ENCODE measurements at regions of chr2 and their contacts with region 1.

Region 1: GRCh38 chr2:38740851-38741731 is 10.1 kb downstream of the SRSF7 start:
- DNase-seq: peak in 2 of 3 donors; percentile 42 to 62
- ATAC-seq: peak; percentile 9 to 18
- H3K4me3 ChIP-seq: no peak overlapping the region
- H3K27ac ChIP-seq: no peak overlapping the region
- H3K4me1 ChIP-seq: peaks cover 3% of the 10 kb centered on the region
- H3K27me3 ChIP-seq: no peaks in the 10 kb centered on the region

Region 2: GRCh38 chr2:38535744-38536506 is 205.2 kb before region 1 on chr2:
- intact Hi-C with region 1: loop called in 2 of 4 experiments (anchors 10 kb)
- DNase-seq: peak; percentile 88 to 96 (median 93)
- ATAC-seq: peak; percentile 94 to 95
- H3K4me3 ChIP-seq: peak overlapping the region; percentile 56
- H3K27ac ChIP-seq: no peak overlapping the region
- H3K4me1 ChIP-seq: no peaks in the 10 kb centered on the region
- H3K27me3 ChIP-seq: no peaks in the 10 kb centered on the region

Region 3: GRCh38 chr2:38581193-38582147 is 159.6 kb before region 1 on chr2:
- intact Hi-C with region 1: loop called in 1 of 4 experiments (anchors 5 kb)
- DNase-seq: peak in 1 of 3 donors; percentile 53
- ATAC-seq: peak; percentile 79 to 80
- H3K4me3 ChIP-seq: no peak overlapping the region
- H3K27ac ChIP-seq: no peak overlapping the region
- H3K4me1 ChIP-seq: peaks cover 1% of the 10 kb centered on the region
- H3K27me3 ChIP-seq: no peaks in the 10 kb centered on the region

Region 4: DNA sequence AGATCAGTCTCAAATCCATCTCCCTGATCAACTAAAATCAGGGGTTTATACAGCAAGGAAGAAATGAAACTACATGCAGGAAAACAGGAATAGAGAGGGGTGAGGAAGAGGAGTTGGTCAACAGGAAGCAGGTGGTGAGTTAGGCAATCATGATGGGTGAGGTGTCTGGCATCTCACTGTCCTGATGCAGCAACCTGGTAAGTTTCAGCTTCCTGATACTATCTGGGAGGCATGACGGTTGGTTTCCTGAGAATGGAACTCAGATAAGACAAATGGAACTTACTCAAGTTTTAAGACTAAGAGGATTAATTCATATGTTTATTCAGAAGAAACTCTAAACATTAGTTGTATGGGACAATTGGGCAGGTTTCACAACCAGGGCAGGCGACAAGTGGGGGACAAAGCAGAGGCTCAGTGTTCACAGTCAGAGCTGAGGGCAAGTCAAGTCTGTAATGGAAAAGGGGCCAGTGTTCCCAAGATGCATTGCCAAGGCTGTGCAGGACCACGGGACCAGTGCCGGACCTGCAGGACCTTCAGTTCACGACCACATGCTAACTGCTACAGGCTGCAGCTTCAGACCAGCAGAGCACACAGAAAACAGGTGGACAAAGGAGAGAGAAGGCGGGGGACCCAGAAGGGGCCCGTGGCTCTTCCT is 92.9 kb before region 1 on chr2:
- intact Hi-C with region 1: no loop called
- DNase-seq: no peak
- ATAC-seq: no peak
- H3K4me3 ChIP-seq: no peak overlapping the region
- H3K27ac ChIP-seq: no peak overlapping the region
- H3K4me1 ChIP-seq: no peaks in the 10 kb centered on the region
- H3K27me3 ChIP-seq: no peaks in the 10 kb centered on the region